Psoas muscle (tissue), 8 donors: ENCODE measurements at regions of chr17 and their contacts with region 1.

Region 1: DNA sequence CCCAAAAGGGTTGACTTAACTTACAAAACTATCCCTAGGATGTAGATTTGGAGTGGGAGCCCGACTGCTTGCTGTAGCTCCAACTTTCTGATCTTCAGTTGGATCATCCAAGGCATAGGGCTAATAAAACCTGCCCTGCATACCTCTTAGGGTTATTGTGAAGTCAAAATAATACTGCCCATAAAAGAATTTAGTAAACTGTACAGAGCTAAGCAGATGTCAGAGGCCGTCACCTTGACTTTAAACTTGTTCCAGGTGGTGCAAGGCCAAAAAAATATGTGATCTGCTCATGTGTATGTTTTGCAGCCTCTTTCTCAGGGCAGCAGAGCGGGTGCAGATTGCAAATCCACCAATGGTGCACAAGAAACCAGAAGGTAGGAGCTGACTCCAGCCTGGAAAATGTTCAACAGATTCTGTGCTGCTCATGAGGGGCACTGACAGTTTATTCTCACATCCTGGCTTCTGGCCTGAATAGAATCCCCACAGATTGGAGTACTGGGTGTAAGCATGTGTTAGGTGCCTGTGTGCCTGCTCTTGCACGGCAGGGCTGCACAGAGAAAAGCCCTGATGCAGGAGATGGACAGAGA is 180.7 kb downstream of the MAP2K4 start:
- DNase-seq: no peak
- ATAC-seq: no peak
- H3K4me3 ChIP-seq: no peak overlapping the region
- H3K27ac ChIP-seq: no peak overlapping the region
- H3K4me1 ChIP-seq: no peaks in the 10 kb centered on the region
- H3K27me3 ChIP-seq: no peaks in the 10 kb centered on the region
- CTCF ChIP-seq: no peak

Region 2: DNA sequence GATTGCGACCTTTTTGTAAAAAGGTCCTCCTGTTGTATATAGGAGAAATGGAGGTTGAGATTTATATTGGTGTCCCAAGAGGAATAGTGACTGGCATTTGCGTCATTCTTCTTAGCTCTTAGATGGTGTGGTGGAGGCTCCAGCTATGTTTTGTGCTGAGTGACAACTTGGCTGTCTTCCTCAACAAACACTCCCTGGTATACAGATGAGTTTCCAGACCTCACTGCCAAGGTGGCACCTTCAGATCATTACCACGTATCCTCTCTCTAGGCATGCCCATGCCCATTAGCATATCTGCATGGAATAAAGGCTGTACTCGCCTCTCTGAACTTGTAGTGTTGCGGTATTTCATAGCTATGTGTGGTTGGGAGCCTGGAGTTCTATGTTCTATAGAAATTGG is 60.7 kb before region 1 on chr17:
- intact Hi-C with region 1: loop called in 1 of 2 experiments (anchors 10 kb)
- DNase-seq: no peak
- ATAC-seq: no peak
- H3K4me3 ChIP-seq: no peak overlapping the region
- H3K27ac ChIP-seq: no peak overlapping the region
- H3K4me1 ChIP-seq: no peaks in the 10 kb centered on the region
- H3K27me3 ChIP-seq: no peaks in the 10 kb centered on the region
- CTCF ChIP-seq: no peak